ENCODE measurements at regions of chr19 and their contacts with region 1.

Region 1: GRCh38 chr19:47075179-47075810 is 26.9 kb upstream of the TMEM160 start:
- DNase-seq: no peak

Region 2: DNA sequence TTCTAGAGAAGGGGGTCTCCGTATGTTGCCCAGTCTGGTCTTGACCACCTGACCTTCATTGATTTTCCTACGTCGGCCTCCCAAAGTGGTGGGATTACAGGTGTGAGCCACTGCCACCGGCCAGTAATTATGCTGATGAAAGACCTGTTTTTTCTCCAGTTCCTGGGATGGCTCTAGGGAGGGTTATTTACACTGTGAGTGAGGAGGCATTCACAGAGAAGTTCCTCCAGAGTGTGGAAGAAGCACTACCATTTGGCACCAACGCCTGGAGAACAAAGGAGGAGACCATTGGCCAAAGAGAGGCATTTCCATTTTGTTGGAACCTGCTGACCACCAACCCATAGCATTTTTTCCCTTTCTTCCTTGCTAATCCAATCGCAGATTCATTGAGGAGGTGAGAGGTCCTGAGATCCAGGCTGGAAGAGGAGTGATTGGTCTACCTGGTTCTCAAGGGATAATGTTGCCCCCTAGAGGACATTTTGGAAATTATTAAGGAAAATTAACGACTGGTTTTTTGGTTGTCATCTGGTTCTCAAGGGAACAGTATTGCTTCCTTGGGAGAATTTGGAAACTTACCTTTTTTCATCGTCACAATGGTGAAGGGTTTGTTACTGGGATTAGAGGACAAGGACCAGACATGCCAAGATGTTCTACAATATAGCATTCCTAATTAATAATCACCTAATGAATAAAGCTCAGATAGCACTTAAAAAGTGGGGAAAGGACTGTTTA is 49.8 kb after region 1 on chr19:
- intact Hi-C with region 1: loop called (anchors 2 kb)
- DNase-seq: peak in 6 of 42 donors; percentile 14 to 59 (median 32)